Transverse colon (tissue), 4 donors: ENCODE measurements at regions of chr7 and their contacts with region 1.

Region 1: GRCh38 chr7:47818796-47819606 is 129.3 kb downstream of the PKD1L1 start:
- DNase-seq: peak; percentile 71
- H3K4me3 ChIP-seq: no peak overlapping the region
- H3K27ac ChIP-seq: no peak overlapping the region
- H3K4me1 ChIP-seq: peaks cover 0 to 8% (median under 1%) of the 10 kb centered on the region in 4 donors
- H3K27me3 ChIP-seq: no peaks in the 10 kb centered on the region
- CTCF ChIP-seq: peak; percentile 89 to 93 (median 92)
- EP300 ChIP-seq: no peak
- POLR2A ChIP-seq: no peak

Region 2: DNA sequence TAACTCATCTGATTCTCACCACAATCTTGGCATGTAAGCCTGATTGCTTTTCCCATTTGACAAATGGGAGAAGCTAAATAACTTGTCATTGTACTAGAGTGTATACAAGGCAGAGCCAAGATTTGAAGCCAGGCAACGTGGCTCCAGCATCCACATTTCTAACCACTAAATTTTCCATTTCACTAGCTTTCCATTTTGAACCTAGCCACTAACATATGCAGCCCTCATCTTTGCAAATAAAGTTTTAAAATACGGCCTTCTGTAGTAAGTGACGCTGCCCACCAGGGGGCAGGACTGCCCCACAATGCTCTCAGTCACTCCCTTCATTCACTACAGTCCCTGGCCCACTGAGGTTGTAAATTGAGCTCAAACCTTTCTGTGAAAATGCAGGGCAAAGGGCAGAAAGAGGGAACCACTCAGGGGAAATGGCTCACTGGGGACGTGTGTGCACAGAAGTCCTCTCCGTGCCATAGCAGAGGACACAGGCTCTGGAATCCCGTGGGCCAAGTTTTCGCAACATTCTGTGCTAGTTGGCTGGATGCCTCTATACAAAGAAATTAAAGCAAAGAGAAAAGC is 552.8 kb before region 1 on chr7:
- in situ Hi-C with region 1: loop called in 3 of 4 experiments (anchors 10 kb)
- intact Hi-C with region 1: loop called (anchors 5 kb)
- DNase-seq: peak; percentile 75
- H3K4me3 ChIP-seq: no peak overlapping the region
- H3K27ac ChIP-seq: peak overlapping the region; percentile 72 to 84 (median 82)
- H3K4me1 ChIP-seq: peaks cover 0 to 9% (median 5%) of the 10 kb centered on the region in 4 donors
- H3K27me3 ChIP-seq: no peaks in the 10 kb centered on the region
- CTCF ChIP-seq: peak; percentile 89 to 97 (median 92)
- EP300 ChIP-seq: no peak
- POLR2A ChIP-seq: no peak

Region 3: DNA sequence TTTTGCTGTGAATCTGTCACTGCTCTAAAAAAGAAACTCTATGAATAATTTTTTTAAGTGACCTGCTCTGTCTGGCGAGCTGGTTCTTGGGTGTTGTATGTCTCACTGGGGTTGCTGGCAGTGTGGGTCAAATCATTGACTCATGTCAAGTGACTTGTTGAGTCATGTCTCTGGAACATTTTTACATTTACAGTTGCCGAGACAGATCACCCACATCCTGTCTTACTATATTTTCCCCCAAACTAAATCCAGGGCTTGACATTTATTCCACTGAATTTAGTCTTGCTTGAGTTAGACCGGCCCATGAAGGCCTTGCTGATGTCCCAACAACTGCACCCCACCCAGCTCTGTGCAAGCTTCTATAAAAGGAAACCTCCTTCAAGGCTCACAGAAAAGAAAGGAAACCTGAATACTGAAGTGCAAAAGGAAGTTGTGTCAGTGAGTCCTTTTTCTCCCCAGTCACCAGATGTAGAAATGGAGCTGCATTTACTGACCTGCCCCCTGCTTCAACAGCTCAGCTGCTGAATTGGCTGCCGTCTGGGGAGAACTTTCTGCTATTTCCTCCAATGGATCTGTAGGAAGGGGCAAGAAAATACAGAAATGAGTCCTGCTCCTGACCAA is 527.4 kb before region 1 on chr7:
- in situ Hi-C with region 1: loop called in 1 of 4 experiments (anchors 25 kb)
- intact Hi-C with region 1: no loop called
- DNase-seq: no peak
- H3K4me3 ChIP-seq: no peak overlapping the region
- H3K27ac ChIP-seq: peak overlapping the region; percentile 17 to 53 (median 32)
- H3K4me1 ChIP-seq: peaks cover 6 to 31% (median 14%) of the 10 kb centered on the region in 4 donors
- H3K27me3 ChIP-seq: no peaks in the 10 kb centered on the region
- CTCF ChIP-seq: no peak
- EP300 ChIP-seq: no peak
- POLR2A ChIP-seq: no peak

Region 4: DNA sequence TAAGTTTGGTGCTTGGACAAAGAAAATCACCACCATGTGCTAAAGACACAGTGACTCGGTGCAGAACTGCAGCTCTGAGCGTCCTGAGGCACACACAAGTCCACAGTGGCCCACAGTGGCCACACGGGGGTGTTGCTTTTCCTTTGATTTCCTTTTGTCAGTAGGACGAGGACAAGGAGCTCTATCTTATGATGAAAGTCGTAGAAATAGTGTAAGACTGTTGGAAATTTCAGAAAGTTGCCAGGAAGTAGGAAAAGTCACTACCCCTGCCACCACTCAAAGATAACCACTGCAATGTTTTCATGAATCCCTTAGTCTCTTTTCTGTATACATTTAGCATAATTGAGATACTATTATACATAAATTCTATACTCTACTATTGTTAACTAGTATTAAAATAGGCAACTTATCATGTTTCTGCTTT is 383.1 kb before region 1 on chr7:
- in situ Hi-C with region 1: loop called (anchors 10 to 25 kb)
- intact Hi-C with region 1: loop called (anchors 10 kb)
- DNase-seq: peak; percentile 80
- H3K4me3 ChIP-seq: no peak overlapping the region
- H3K27ac ChIP-seq: no peak overlapping the region
- H3K4me1 ChIP-seq: no peaks in the 10 kb centered on the region
- H3K27me3 ChIP-seq: no peaks in the 10 kb centered on the region
- CTCF ChIP-seq: peak; percentile 71 to 82 (median 76)
- EP300 ChIP-seq: no peak
- POLR2A ChIP-seq: no peak

Region 5: GRCh38 chr7:47444379-47445057 is 374.5 kb before region 1 on chr7:
- in situ Hi-C with region 1: loop called (anchors 10 to 25 kb)
- intact Hi-C with region 1: loop called (anchors 10 kb)
- DNase-seq: peak; percentile 38
- H3K4me3 ChIP-seq: no peak overlapping the region
- H3K27ac ChIP-seq: peak overlapping the region in 1 of 4 donors; percentile 1
- H3K4me1 ChIP-seq: peaks cover 6 to 44% (median 22%) of the 10 kb centered on the region in 4 donors
- H3K27me3 ChIP-seq: no peaks in the 10 kb centered on the region
- CTCF ChIP-seq: peak; percentile 53 to 81 (median 59)
- EP300 ChIP-seq: no peak
- POLR2A ChIP-seq: no peak

Region 6: DNA sequence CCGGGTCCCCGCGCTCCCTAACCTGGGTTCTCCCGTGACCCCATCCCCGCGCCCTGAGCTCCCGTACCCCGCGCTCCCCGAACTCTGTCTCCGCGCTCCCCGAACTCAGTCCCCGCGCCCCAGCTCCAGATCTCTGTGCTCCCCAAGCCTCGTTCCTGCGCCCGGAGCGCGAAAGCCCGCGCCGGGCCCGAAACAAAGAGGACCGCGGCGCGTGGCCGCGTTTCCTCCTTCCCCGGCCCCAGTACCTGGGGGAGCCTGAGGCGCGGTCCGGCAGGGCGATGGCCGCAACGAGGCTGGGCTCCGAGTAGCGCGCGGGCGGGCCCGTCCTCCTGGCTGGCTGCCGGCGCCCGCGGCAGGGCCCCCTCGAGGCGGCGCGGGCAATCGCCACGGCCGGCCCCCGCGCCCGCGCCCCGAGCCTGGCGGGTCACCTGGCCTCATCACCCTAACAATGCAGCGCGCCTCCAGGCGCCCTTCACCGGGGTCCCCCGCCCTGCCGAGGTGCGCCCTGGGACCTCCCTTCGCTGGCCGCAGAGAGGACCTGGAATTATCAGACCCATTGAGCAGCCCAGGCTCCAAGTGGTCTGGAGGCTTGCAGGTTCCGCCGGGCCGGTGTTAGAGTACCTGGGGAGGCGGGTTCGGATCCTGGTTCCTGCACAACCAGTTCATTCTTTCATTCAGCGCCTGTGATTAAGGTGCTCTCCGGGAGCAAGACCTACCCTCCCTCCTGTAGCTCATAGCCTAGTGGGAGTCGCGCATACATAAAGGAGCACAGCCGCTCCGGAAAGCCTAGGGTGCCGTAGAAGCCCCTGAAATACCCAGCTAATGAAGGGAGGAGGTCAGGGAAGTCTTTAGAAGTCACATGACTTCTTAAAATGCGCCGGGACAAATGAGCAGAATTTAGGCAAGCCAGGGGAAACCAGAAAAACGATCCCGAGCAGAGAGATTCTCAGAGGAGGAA is 236.9 kb before region 1 on chr7 and contains the start of gene TNS3:
- in situ Hi-C with region 1: loop called in 1 of 4 experiments (anchors 25 kb)
- intact Hi-C with region 1: no loop called
- DNase-seq: peak; percentile 69
- H3K4me3 ChIP-seq: peak within 1 kb of the TSS; percentile 73 to 95 (median 80)
- H3K27ac ChIP-seq: peak within 1 kb of the TSS; percentile 80 to 93 (median 90)
- H3K4me1 ChIP-seq: peaks cover 3 to 56% (median 31%) of the 10 kb centered on the region in 4 donors
- H3K27me3 ChIP-seq: no peaks in the 10 kb centered on the region
- CTCF ChIP-seq: peak in 4 of 5 experiments; percentile 12 to 27 (median 16)
- EP300 ChIP-seq: no peak
- POLR2A ChIP-seq: peak; percentile 61
- total RNA-seq, gene TNS3: 58.5 to 104 (median 72.7) TPM

Region 7: DNA sequence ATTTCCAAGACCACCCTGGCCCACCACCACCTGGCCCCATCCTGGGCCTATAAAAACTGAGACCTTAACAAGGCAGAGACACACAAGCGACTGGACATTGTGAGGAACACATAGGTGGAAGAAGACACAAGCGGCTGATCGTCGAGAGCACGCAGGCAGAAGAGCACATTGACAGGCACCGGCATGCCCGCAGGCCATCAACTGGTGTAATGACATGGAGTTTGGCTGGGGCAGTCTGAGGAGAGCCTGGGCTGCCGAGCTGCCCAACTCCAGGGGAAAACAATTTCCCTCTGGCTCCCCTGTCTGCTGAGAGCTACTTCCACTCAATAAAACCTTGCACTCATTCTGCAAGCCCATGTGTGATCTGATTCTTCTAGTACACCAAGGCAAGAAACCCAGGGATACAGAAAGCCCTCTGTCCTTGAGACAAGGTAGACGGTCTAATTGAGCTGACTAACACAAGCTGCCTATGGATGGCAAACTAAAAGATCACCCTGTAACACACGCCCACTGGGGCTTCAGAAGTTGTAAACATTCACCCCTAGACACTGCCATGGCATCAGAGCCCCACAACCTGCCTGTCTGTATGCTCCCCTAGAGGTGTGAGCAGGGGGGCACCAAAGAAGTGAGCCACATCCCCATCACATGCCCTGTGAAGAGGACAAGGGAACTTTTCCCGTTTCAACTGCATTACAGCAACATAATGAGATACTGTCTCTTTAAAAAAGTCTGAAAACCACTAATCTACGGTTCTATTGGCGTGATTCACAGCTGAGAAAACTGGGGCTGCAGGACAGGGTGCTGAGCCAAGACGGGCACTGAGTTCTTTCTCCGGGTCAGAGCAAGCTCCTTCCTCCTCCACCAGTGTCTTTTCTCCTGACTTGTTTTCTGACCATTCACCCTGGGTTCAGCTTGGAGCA is 218.5 kb before region 1 on chr7:
- in situ Hi-C with region 1: loop called in 2 of 4 experiments (anchors 25 kb)
- intact Hi-C with region 1: no loop called
- DNase-seq: no peak
- H3K4me3 ChIP-seq: no peak overlapping the region
- H3K27ac ChIP-seq: peak overlapping the region in 1 of 4 donors; percentile 17
- H3K4me1 ChIP-seq: peaks cover 9 to 34% (median 20%) of the 10 kb centered on the region in 4 donors
- H3K27me3 ChIP-seq: no peaks in the 10 kb centered on the region
- CTCF ChIP-seq: no peak
- EP300 ChIP-seq: no peak
- POLR2A ChIP-seq: no peak

Region 8: DNA sequence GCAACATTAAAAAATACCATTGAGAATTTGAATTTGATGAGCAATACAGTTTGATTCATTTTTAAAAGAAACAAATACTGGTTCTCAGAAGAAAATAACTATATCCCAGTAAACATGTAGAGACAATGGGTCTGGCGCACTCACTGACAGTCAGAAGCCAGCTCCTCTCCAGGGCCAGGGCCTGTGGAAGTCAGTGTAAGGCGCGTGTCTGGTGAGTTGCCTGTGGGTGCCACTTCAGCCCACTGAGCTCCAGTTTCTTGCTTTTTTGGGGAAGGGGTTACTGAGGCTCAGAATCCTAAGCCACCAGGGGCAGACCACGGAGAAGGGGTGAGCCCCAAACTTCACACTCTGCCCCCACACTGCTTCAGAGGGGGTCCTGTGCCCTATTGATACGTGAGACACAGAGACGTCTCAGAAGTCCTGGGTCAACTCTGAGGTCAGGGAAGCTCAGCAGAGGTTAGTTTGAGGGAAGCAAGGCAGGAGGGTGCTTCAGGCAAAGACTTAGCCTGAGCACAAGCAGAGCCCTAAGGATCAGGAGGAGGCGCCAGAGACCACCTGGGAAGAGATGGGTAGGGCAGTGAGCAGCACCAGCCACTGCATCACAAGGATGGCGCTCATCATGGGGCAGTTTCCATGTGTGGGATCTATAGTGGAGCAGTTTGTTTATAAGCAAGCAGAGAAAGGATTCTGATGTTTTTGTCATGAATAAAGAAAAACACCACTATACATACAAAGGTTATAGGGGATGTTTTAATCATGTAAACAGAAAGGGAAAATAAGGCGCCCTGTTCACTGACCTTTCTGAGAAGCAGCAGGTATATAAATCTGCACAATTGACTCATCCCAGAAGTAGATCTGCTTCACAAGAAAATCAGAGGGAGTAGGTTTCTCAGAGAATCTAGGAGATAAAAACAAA is 33.6 kb after region 1 on chr7:
- in situ Hi-C with region 1: no loop called
- intact Hi-C with region 1: no loop called
- DNase-seq: no peak
- H3K4me3 ChIP-seq: no peak overlapping the region
- H3K27ac ChIP-seq: no peak overlapping the region
- H3K4me1 ChIP-seq: no peaks in the 10 kb centered on the region
- H3K27me3 ChIP-seq: no peaks in the 10 kb centered on the region
- CTCF ChIP-seq: no peak
- EP300 ChIP-seq: no peak
- POLR2A ChIP-seq: no peak